ENCODE measurements at regions of chr4 and their contacts with region 1.

Region 1: DNA sequence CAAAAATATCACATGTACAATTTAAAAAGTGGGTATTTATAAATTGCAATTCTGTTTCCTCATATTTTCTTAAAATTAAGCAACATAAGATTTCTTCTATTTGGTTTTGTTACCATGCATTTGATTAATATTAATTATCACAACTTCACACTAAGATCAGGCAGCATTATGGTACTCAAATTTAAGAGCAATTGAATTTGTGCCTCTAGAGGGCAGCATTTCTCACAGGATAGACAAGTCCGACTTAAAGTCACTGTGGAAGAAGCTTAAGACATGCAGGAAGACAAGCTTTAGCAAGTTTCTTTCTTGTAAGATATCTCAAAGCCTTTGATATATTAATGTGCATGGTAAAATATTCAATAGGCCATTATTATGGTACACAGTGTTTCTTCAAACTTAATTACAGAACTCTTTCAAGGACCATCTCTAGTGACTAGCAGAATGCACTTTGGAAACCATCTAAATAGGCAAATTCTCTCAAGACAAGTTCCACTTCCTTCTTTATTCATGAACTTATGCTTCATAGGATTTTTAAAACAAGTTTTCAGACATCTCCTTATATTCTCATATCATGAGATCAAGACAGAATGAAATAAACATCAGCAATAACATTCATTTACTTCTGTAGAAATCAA is 35.0 kb downstream of the FBXW7 start:
- DNase-seq: peak; percentile 46
- CTCF ChIP-seq: peak; percentile 83

Region 2: DNA sequence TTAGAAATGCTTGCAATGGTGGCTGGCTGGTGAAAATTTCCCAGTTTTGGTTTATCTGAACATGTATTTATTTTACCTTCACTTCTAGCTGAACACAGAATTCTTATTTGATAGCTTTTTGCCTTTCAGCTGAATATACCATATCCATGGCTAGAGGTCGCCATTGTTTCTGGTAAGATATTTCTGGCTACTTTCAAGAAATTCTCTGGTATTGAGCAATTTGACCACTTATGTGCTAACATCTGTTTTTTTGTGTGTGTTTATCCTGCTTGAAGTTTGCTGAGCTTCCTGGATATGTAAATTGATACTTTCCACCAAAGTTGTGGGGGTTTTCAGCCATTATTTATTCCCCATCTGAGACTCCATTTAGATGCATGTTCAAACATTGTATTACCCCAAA is 40.4 kb before region 1 on chr4:
- CTCF ChIA-PET with region 1: interaction called, 11 read pairs
- POLR2A ChIA-PET with region 1: no interaction called
- DNase-seq: peak; percentile 34
- CTCF ChIP-seq: peak; percentile 38

Region 3: GRCh38 chr4:152515678-152516077 is 14.8 kb after region 1 on chr4:
- CTCF ChIA-PET with region 1: interaction called, 38 read pairs
- POLR2A ChIA-PET with region 1: no interaction called
- DNase-seq: no peak
- CTCF ChIP-seq: no peak

Region 4: DNA sequence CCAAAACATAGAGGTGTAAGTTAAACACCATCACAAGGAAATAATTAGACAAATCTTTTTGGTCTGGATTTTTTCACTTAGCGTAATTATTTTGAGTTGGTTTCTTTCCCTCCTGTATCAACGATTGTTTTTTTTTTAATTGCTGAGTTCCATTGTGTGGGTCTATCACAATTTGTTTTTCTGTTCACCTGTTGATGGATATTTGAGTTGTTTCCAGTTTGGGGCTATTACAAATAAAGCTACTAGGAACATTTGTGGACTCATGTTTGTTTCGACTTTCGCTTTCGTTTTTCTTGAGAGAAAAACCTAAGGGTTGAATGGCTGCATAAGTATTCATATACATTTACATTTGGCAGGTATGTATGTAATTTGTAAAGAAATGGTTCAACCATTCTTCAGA is 55.4 kb after region 1 on chr4:
- CTCF ChIA-PET with region 1: interaction called, 25 read pairs
- POLR2A ChIA-PET with region 1: no interaction called
- DNase-seq: no peak
- CTCF ChIP-seq: no peak

Region 5: GRCh38 chr4:152640058-152640833 is 139.3 kb after region 1 on chr4:
- CTCF ChIA-PET with region 1: interaction called, 151 read pairs
- POLR2A ChIA-PET with region 1: no interaction called
- DNase-seq: no peak
- CTCF ChIP-seq: peak; percentile 40

Region 6: GRCh38 chr4:152779513-152780266 is 278.8 kb after region 1 on chr4 and contains the starts of genes ARFIP1 and TIGD4:
- CTCF ChIA-PET with region 1: interaction called, 18 read pairs
- POLR2A ChIA-PET with region 1: no interaction called
- DNase-seq: peak; percentile 97
- CTCF ChIP-seq: peak; percentile 49

Measured in GM10248 (cell line).